ENCODE measurements at regions of chr11 and their contacts with region 1.

Region 1: DNA sequence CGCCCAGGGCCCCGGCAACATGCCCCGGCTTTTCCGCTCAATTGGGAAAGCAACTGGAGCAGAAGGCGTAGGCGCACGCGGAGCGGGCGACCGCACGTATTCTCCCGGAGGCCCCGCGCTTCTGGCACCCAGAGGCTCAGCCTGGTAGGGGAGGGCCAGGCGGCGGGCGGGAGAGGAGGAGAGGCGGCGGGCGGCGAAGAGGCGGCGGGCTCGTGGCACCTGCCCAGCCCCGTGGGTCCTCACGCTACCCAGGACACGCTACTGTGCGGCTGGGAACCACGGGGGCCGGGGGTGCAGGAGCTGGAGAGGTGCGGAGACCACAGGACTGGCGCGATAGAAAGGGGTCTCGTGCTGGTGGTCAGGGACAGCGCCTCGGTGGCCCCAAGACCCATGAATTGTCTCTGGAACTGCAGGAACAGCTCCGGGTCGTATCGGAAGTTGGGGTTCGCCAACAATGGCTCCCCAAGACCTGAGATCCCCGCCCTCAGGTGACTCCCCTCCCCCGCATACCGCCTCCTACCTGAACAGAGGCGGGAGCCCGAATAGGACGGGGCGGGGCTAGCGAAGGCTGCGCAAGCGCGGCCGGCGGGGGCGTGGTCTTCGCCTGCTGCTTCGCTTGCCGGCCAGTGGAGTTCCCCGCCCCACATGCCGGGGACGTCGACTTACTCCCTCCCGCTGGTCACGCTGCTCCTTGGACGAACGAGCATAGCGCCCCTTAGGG is at the start of gene SLC37A4:
- DNase-seq: peak; percentile 100
- H3K4me3 Mint-ChIP-seq: peak within 1 kb of the TSS; percentile 83
- H3K27ac Mint-ChIP-seq: peak within 1 kb of the TSS; percentile 89
- H3K4me1 Mint-ChIP-seq: peaks cover 19% of the 10 kb centered on the region
- H3K27me3 Mint-ChIP-seq: no peaks in the 10 kb centered on the region
- total RNA-seq, gene SLC37A4: 28.8 and 31.6 TPM in 2 replicates

Region 2: DNA sequence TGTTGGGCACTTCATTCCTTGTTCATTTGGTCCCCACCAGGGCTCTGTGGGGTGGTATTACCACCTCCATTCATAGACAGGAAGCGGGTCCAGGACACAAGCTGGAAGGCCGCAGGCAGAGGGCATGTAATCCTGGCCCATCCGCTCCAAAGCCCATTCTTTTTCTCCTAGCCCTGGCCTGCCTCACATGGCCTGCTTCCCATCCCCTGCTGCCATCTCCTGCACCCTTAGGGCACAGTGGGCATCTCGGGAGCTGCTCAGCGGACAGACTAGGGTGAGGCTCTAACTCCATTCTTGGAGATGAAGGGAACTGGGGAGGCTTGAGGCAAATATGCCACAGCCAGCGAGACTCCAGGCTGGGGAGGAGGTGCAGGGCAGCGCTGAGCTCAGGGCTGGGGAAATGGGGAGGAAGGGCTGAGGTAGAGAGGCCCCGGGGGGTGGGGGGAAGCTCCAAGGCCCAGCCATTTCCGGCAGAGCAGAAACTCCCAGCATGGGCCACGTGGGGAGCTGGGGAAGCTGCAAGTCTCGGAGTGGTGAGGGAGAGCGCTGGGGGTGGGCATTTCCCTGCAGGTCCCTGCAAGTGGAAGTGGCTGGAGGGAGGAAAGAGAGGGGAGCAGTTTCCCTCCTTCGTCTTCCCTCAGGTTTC is 90.4 kb before region 1 on chr11:
- intact Hi-C with region 1: no loop called
- DNase-seq: peak; percentile 86
- H3K4me3 Mint-ChIP-seq: peak overlapping the region; percentile 56
- H3K27ac Mint-ChIP-seq: peak overlapping the region; percentile 80
- H3K4me1 Mint-ChIP-seq: peaks cover 16% of the 10 kb centered on the region
- H3K27me3 Mint-ChIP-seq: peaks cover 3% of the 10 kb centered on the region

Region 3: GRCh38 chr11:118997627-118998387 is 32.7 kb before region 1 on chr11 and contains the start of gene CENATAC:
- intact Hi-C with region 1: loop called (anchors 1 kb)
- DNase-seq: peak; percentile 99
- H3K4me3 Mint-ChIP-seq: peak within 1 kb of the TSS; percentile 90
- H3K27ac Mint-ChIP-seq: peak within 1 kb of the TSS; percentile 94
- H3K4me1 Mint-ChIP-seq: peaks cover 24% of the 10 kb centered on the region
- H3K27me3 Mint-ChIP-seq: no peaks in the 10 kb centered on the region
- total RNA-seq, gene CENATAC: 46.3 and 47.1 TPM in 2 replicates

Region 4: GRCh38 chr11:119175493-119176077 is 145.1 kb after region 1 on chr11:
- intact Hi-C with region 1: no loop called
- DNase-seq: no peak
- H3K4me3 Mint-ChIP-seq: no peak overlapping the region
- H3K27ac Mint-ChIP-seq: peak overlapping the region; percentile 63
- H3K4me1 Mint-ChIP-seq: peaks cover 17% of the 10 kb centered on the region
- H3K27me3 Mint-ChIP-seq: no peaks in the 10 kb centered on the region

Measured in activated CD4-positive, alpha-beta T cell treated with anti-CD3 and anti-CD28 coated beads, Interleukin-2, amount 10 ng/mL, durations not matched to agents 24 days and 14 days (primary cell).